Naive thymus-derived CD4-positive, alpha-beta T cell (primary cell): ENCODE measurements at regions of chr12 and their contacts with region 1.

Region 1: DNA sequence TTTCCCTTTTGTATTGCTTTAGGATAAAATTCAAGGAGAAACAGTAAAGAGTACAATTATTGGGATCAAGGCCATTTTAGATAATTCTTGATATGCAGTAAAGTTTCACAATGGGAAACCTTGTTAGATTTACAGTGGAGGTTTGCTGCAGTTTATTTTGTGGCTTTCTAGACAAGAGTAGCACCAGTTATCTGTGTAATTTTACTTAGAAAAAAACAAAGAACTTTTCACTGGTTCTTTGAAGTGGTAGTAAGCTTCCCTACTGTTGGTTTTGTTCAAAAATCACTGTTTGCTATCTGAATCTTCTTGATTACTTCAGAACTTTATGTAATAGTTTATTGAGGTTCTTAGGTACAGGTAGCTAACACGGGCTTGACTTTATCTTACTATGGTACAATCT is 42.0 kb downstream of the ADIPOR2 start:
- DNase-seq: peak in 4 of 9 donors; percentile 2 to 30 (median 18)
- ATAC-seq: no peak
- H3K4me3 ChIP-seq: no peak overlapping the region
- H3K4me3 Mint-ChIP-seq: peak overlapping the region in 4 of 10 donors; percentile 39 to 61 (median 48)
- H3K27ac ChIP-seq: no peak overlapping the region
- H3K27ac Mint-ChIP-seq: peak overlapping the region in 3 of 9 donors; percentile 23 to 65 (median 44)
- H3K4me1 ChIP-seq: peaks cover 4 to 5% of the 10 kb centered on the region in 2 donors
- H3K4me1 Mint-ChIP-seq: peaks cover 12 to 61% (median 44%) of the 10 kb centered on the region in 7 donors
- H3K27me3 ChIP-seq: no peaks in the 10 kb centered on the region
- H3K27me3 Mint-ChIP-seq: no peaks in the 10 kb centered on the region

Region 2: DNA sequence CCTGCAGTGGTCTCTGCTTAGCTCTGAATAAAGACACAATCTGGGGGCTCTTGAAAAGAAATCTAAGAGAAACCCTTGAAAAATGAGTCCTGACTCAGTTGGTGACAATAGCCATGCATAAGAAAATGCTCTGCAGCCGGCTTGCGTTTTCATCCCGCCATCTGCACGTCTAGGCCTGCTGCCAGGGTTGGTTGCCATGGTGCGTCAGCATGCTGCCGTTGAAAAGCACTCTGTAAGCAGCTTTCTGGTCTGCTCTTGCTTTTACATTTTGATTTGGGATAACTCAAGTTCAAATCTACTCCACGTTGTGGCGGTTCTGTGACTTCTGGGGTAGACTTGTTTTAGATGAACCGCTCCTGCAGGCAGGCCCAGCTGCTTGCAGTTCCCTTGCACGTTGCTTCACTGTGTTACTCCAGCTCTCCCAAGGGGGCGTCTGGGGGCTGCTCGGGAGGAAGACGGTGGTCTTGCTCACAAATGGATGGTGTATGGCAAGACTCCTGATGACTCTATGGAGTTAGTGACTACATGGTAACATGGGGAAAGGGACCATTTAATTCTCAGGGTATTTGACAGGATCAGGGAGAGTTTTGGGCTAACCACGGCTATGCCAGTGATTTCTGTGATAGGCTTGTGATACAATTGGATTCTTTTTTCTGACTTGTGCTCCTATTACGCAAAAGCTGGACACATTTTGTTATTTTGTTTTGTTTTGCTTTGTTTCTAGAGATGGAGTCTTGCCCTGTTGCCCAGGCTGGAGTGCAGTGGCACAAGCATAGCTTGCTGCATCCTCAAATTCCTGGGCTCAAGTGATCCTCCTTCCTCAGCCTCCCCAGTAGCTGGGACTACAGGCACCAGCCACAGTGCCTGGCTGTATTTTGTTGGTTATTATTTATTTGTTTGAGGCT is 88.1 kb before region 1 on chr12:
- CTCF ChIA-PET with region 1: no interaction called
- POLR2A ChIA-PET with region 1: no interaction called
- intact Hi-C with region 1: no loop called
- DNase-seq: no peak
- ATAC-seq: no peak
- H3K4me3 ChIP-seq: no peak overlapping the region
- H3K4me3 Mint-ChIP-seq: peak overlapping the region in 1 of 10 donors; percentile 40
- H3K27ac ChIP-seq: no peak overlapping the region
- H3K27ac Mint-ChIP-seq: no peak overlapping the region
- H3K4me1 ChIP-seq: no peaks in the 10 kb centered on the region
- H3K4me1 Mint-ChIP-seq: peaks cover 0 to 7% (median 0%) of the 10 kb centered on the region in 7 donors
- H3K27me3 ChIP-seq: no peaks in the 10 kb centered on the region
- H3K27me3 Mint-ChIP-seq: peaks cover 0 to 25% (median 7%) of the 10 kb centered on the region in 5 donors

Region 3: DNA sequence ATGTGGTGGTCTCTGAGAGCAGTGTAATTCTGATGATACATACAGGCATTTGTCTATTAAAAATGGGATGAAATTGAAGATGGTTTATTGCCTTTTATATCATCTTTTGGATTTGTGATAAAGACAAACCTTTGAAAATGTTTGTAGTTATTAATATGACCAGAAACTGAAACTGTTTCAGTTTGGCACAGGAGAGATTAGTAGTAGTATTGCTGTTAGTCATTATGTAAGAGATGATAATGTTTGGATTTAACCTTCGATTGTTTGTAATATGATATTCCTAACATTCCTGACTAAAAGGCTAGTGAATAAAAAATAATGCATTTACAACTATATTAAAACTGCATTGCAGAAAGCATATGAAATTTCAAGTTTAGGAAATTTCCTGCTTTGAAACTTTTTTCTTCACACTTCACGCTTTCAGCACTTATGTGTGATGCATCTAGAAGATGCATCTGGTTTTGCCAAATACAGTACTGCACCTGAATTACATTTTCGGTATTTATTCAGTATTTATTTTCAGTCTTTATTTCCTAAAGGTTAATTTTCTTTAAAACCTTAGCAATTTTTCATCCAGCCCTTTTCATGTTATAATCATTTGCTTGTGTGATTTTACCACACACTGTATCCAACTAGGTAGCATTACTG is 16.6 kb before region 1 on chr12:
- CTCF ChIA-PET with region 1: no interaction called
- POLR2A ChIA-PET with region 1: no interaction called
- intact Hi-C with region 1: loop called in 1 of 2 experiments (anchors 1 kb)
- DNase-seq: no peak
- ATAC-seq: no peak
- H3K4me3 ChIP-seq: no peak overlapping the region
- H3K4me3 Mint-ChIP-seq: peak overlapping the region in 1 of 10 donors; percentile 28
- H3K27ac ChIP-seq: no peak overlapping the region
- H3K27ac Mint-ChIP-seq: peak overlapping the region in 1 of 9 donors; percentile 45
- H3K4me1 ChIP-seq: peaks cover 5 to 9% of the 10 kb centered on the region in 2 donors
- H3K4me1 Mint-ChIP-seq: peaks cover 8 to 71% (median 50%) of the 10 kb centered on the region in 7 donors
- H3K27me3 ChIP-seq: no peaks in the 10 kb centered on the region
- H3K27me3 Mint-ChIP-seq: no peaks in the 10 kb centered on the region

Region 4: DNA sequence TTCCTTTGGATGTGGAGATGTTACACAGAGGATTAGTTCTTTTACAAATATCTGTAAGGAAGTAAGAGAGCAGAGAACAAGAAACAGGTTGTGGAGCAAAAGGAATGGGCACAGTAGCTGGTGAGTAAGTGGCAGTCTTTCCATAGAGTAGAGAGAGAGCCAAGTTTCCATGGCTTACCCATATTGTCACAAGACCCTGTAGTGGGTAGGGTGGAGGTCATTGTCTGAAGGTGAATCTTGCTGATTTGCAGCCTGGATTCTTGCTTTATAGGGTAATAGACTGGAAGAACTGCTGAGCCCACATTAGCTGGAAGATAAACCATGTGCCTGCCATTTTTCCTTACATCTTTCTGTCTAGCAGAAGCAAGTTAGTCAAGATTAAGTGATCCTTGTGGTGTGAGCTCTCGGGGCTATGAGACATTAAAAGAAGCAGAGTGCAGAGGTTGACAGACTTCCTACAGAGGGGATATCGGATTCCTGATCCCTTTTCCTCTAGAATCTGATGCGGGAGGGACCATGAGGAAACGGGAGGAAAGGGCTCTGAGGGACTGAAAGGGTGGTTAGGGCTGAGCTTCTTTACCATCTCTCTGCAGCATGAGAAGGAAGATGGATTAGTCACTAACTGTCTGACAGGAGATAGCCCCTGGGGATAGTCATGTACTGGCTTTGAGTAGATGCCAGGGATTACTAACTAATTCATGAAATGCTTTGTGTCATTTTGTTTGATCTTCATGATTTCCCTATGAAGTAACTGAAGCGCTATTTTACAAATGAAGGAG is 43.4 kb after region 1 on chr12:
- CTCF ChIA-PET with region 1: no interaction called
- POLR2A ChIA-PET with region 1: no interaction called
- intact Hi-C with region 1: no loop called
- DNase-seq: no peak
- ATAC-seq: no peak
- H3K4me3 ChIP-seq: no peak overlapping the region
- H3K4me3 Mint-ChIP-seq: no peak overlapping the region
- H3K27ac ChIP-seq: no peak overlapping the region
- H3K27ac Mint-ChIP-seq: peak overlapping the region in 3 of 9 donors; percentile 13 to 46 (median 43)
- H3K4me1 ChIP-seq: no peaks in the 10 kb centered on the region
- H3K4me1 Mint-ChIP-seq: peaks cover 2 to 22% (median 20%) of the 10 kb centered on the region in 7 donors
- H3K27me3 ChIP-seq: no peaks in the 10 kb centered on the region
- H3K27me3 Mint-ChIP-seq: no peaks in the 10 kb centered on the region